Right cardiac atrium (tissue), 5 donors: ENCODE measurements at regions of chr5 and their contacts with region 1.

Region 1: GRCh38 chr5:136249678-136250266 is 56.8 kb upstream of the SMIM32 start:
- DNase-seq: peak; percentile 66 to 85 (median 77)
- ATAC-seq: peak; percentile 65 to 78
- H3K4me3 ChIP-seq: no peak overlapping the region
- H3K27ac ChIP-seq: no peak overlapping the region
- H3K4me1 ChIP-seq: no peaks in the 10 kb centered on the region
- H3K27me3 ChIP-seq: no peaks in the 10 kb centered on the region

Region 2: GRCh38 chr5:136192526-136193321 is 57.0 kb before region 1 on chr5 and contains the start of gene SMIM32:
- intact Hi-C with region 1: no loop called
- DNase-seq: peak in 2 of 3 donors; percentile 52 to 66
- ATAC-seq: peak; percentile 34 to 38
- H3K4me3 ChIP-seq: peak within 1 kb of the TSS; percentile 22
- H3K27ac ChIP-seq: no peak within 1 kb of the TSS
- H3K4me1 ChIP-seq: peaks cover 6% of the 10 kb centered on the region
- H3K27me3 ChIP-seq: no peaks in the 10 kb centered on the region
- total RNA-seq, gene SMIM32: not detected

Region 3: GRCh38 chr5:136350343-136350742 is 100.6 kb after region 1 on chr5:
- intact Hi-C with region 1: no loop called
- DNase-seq: no peak
- ATAC-seq: no peak
- H3K4me3 ChIP-seq: no peak overlapping the region
- H3K27ac ChIP-seq: no peak overlapping the region
- H3K4me1 ChIP-seq: no peaks in the 10 kb centered on the region
- H3K27me3 ChIP-seq: no peaks in the 10 kb centered on the region

Region 4: GRCh38 chr5:136424835-136425584 is 175.2 kb after region 1 on chr5:
- intact Hi-C with region 1: loop called in 2 of 4 experiments (anchors 10 kb)
- DNase-seq: peak; percentile 68 to 89 (median 80)
- ATAC-seq: peak; percentile 66 to 68
- H3K4me3 ChIP-seq: no peak overlapping the region
- H3K27ac ChIP-seq: no peak overlapping the region
- H3K4me1 ChIP-seq: no peaks in the 10 kb centered on the region
- H3K27me3 ChIP-seq: no peaks in the 10 kb centered on the region

Region 5: GRCh38 chr5:136769900-136770684 is 520.3 kb after region 1 on chr5:
- intact Hi-C with region 1: loop called (anchors 2 to 10 kb)
- DNase-seq: peak; percentile 55 to 82 (median 71)
- ATAC-seq: peak; percentile 81 to 85
- H3K4me3 ChIP-seq: no peak overlapping the region
- H3K27ac ChIP-seq: no peak overlapping the region
- H3K4me1 ChIP-seq: no peaks in the 10 kb centered on the region
- H3K27me3 ChIP-seq: no peaks in the 10 kb centered on the region